Calu3 (cell line): ENCODE measurements at regions of chr15 and their contacts with region 1.

Region 1: DNA sequence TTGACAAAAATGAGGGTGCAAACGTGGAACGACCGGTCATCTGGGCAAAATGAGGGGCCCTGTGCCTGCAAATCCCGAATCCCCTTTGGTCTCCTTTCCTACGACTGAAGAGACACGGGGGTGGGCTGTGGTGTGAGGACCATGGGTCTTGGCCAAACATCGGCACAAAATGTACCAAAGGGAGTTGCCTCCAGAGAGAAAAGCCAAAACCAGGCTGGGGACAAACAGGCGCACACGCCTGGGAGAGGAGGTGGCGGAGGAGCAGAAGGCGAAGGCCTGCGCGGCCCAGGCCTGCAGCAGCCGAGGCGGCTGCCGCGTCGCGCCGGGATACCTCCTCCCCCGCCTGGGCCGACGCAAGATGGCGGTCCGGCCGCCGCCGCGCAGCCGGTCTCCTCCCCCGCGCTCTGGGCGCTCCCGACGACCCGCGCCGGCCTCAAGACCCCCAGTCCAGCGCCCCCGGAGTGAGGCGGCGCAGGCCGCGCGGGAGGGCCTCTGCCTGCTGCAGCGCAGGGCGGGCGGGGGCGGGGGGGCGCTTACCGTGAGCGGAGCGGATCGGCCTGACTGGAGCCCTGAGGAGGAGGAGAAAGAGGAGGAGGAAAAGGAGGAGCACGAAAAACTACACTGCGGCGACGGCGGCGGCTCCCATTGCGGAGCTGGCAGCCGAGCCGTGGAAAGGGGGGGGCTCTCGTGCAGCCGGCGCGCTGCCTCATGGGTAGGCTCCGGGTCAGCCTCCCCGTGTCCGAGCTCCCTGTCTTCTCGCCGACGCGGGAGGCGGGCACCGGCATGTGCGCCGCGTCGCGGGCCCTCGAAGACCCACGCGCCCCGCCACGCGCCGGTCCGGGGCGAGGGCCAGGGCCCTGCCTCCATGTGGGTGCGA is at the start of gene ZNF280D:
- DNase-seq: peak; percentile 88
- H3K4me3 Mint-ChIP-seq: peak within 1 kb of the TSS; percentile 93
- H3K27ac Mint-ChIP-seq: peak within 1 kb of the TSS; percentile 94
- H3K4me1 Mint-ChIP-seq: peaks cover 9% of the 10 kb centered on the region
- H3K27me3 Mint-ChIP-seq: no peaks in the 10 kb centered on the region
- CTCF ChIP-seq: no peak
- total RNA-seq, gene ZNF280D: 36.0 and 40.3 TPM in 2 replicates

Region 2: GRCh38 chr15:56616529-56616928 is 116.6 kb before region 1 on chr15:
- CTCF ChIA-PET with region 1: no interaction called
- intact Hi-C with region 1: no loop called
- DNase-seq: no peak
- H3K4me3 Mint-ChIP-seq: no peak overlapping the region
- H3K27ac Mint-ChIP-seq: no peak overlapping the region
- H3K4me1 Mint-ChIP-seq: peaks cover 8% of the 10 kb centered on the region
- H3K27me3 Mint-ChIP-seq: no peaks in the 10 kb centered on the region
- CTCF ChIP-seq: no peak

Region 3: DNA sequence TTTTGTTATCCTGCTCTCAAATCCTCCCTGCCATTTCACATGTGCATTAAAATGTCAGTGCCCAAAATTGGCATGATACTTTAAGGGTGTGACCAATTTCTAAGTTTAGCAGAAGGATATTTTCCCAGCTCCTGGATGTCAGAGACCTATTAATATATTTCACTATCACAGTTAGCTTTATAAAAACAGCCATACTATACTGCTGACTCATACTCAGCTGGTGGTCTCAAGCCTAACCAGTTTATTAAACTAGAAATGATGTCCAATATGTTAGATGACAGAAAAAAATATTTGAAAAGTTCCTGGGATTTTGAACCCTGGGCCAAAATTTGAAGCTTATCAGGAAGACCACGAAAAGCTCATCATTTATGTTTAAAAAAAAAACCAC is 61.0 kb after region 1 on chr15:
- CTCF ChIA-PET with region 1: no interaction called
- intact Hi-C with region 1: loop called (anchors 5 kb)
- DNase-seq: no peak
- H3K4me3 Mint-ChIP-seq: no peak overlapping the region
- H3K27ac Mint-ChIP-seq: no peak overlapping the region
- H3K4me1 Mint-ChIP-seq: no peaks in the 10 kb centered on the region
- H3K27me3 Mint-ChIP-seq: no peaks in the 10 kb centered on the region
- CTCF ChIP-seq: no peak

Region 4: GRCh38 chr15:57245130-57245529 is 512.0 kb after region 1 on chr15:
- CTCF ChIA-PET with region 1: interaction called, 10 read pairs
- intact Hi-C with region 1: no loop called
- DNase-seq: no peak
- H3K4me3 Mint-ChIP-seq: no peak overlapping the region
- H3K27ac Mint-ChIP-seq: no peak overlapping the region
- H3K4me1 Mint-ChIP-seq: no peaks in the 10 kb centered on the region
- H3K27me3 Mint-ChIP-seq: no peaks in the 10 kb centered on the region
- CTCF ChIP-seq: no peak